ENCODE measurements at regions of chr12 and their contacts with region 1.

Region 1: DNA sequence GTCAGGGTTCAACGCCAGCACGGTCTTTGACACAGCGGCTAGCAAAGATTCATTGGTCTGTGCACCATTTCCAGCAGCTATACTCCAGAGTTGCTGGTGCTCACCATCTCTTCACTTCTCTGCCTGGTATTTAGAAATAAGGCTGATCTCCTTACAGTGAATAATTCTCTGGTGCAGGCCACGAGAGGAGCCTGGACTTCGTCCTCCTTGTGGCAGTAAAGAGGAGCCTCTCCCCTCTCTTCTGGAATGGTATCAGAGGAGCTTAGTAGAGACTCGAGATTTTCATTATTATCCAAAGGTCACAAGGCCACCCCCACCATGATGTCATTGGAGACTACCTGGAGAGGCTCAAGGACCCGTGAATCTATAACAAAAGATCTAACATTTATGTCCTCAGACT is 30.8 kb upstream of the BCL2L14 start:
- DNase-seq: no peak
- CTCF ChIP-seq: no peak

Region 2: GRCh38 chr12:10623131-10623530 is 1416.8 kb before region 1 on chr12:
- in situ Hi-C with region 1: no loop called
- DNase-seq: no peak
- CTCF ChIP-seq: no peak

Region 3: GRCh38 chr12:11581179-11581755 is 458.6 kb before region 1 on chr12:
- in situ Hi-C with region 1: loop called (anchors 5 kb)
- DNase-seq: no peak
- CTCF ChIP-seq: peak; percentile 37